ENCODE measurements at regions of chr17 and their contacts with region 1.

Region 1: DNA sequence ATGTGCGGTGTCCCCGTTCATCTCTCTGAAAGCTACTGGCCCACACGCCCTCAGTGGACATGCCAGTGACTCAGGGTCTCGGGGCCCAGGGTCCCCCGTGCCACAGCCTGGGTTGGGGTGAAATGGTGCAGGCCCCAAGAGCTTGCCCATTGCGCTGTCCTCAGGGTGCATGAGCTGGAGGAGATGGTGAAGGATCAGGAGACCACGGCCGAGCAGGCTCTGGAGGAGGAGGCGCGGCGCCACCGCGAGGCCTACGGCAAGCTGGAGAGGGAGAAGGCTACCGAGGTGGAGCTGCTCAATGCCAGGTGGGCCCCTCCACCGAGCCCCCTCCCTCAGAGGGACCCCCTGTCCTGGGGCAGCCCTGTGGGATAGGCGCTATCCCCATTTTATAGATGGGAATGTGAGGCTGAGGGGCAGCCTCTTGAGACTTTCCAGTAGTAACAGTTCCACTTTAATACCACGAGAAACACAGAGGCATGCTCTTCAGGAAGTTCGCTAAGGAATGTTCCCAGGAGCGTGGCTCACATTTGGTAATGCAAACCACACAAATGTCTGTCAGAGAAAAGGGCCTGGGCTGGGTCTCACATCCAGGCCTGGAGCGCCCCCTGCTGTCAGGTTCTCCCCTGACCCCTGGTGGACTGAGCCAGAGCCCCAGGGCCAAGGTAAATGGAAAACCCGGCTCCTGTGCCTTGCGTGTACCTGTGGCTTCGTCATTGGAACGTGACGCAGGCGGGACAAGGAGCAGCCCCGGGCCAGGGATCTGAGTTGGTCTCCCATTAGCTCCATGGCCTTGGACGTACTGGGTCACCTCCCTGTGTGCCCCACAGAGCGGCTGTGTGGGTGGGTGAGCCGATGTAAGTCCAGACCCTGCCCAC is 133.7 kb downstream of the RAB11FIP4 start:
- DNase-seq: peak; percentile 88
- H3K4me3 Mint-ChIP-seq: no peak overlapping the region
- H3K27ac Mint-ChIP-seq: no peak overlapping the region
- H3K4me1 Mint-ChIP-seq: no peaks in the 10 kb centered on the region
- H3K27me3 Mint-ChIP-seq: no peaks in the 10 kb centered on the region

Region 2: GRCh38 chr17:31433091-31433790 is 91.9 kb before region 1 on chr17:
- CTCF ChIA-PET with region 1: interaction called, 15 read pairs
- POLR2A ChIA-PET with region 1: no interaction called
- DNase-seq: peak; percentile 69
- H3K4me3 Mint-ChIP-seq: no peak overlapping the region
- H3K27ac Mint-ChIP-seq: no peak overlapping the region
- H3K4me1 Mint-ChIP-seq: peaks cover 22% of the 10 kb centered on the region
- H3K27me3 Mint-ChIP-seq: peaks cover 19% of the 10 kb centered on the region

Region 3: GRCh38 chr17:31508288-31509094 is 16.7 kb before region 1 on chr17:
- CTCF ChIA-PET with region 1: interaction called, 18 read pairs
- POLR2A ChIA-PET with region 1: no interaction called
- DNase-seq: peak; percentile 88
- H3K4me3 Mint-ChIP-seq: peak overlapping the region; percentile 77
- H3K27ac Mint-ChIP-seq: peak overlapping the region; percentile 100
- H3K4me1 Mint-ChIP-seq: peaks cover 55% of the 10 kb centered on the region
- H3K27me3 Mint-ChIP-seq: no peaks in the 10 kb centered on the region